ENCODE measurements at regions of chr10 and their contacts with region 1.

Region 1: GRCh38 chr10:52883996-52884871 is 111.7 kb upstream of the MBL2 start:
- DNase-seq: peak; percentile 98
- H3K4me3 Mint-ChIP-seq: peak overlapping the region; percentile 65
- H3K27ac Mint-ChIP-seq: peak overlapping the region; percentile 85
- H3K4me1 Mint-ChIP-seq: peaks cover 30% of the 10 kb centered on the region
- H3K27me3 Mint-ChIP-seq: no peaks in the 10 kb centered on the region
- CTCF ChIP-seq: peak; percentile 93

Region 2: GRCh38 chr10:52818019-52818418 is 66.2 kb before region 1 on chr10:
- CTCF ChIA-PET with region 1: interaction called, 69 read pairs
- POLR2A ChIA-PET with region 1: interaction called, 19 read pairs
- intact Hi-C with region 1: loop called (anchors 1 kb)
- DNase-seq: peak; percentile 80
- H3K4me3 Mint-ChIP-seq: no peak overlapping the region
- H3K27ac Mint-ChIP-seq: no peak overlapping the region
- H3K4me1 Mint-ChIP-seq: peaks cover 6% of the 10 kb centered on the region
- H3K27me3 Mint-ChIP-seq: no peaks in the 10 kb centered on the region
- CTCF ChIP-seq: peak; percentile 44

Region 3: GRCh38 chr10:53209944-53210611 is 325.8 kb after region 1 on chr10:
- CTCF ChIA-PET with region 1: interaction called, 31 read pairs
- POLR2A ChIA-PET with region 1: interaction called, 3 read pairs
- intact Hi-C with region 1: loop called (anchors 1 kb)
- DNase-seq: peak; percentile 49
- H3K4me3 Mint-ChIP-seq: no peak overlapping the region
- H3K27ac Mint-ChIP-seq: no peak overlapping the region
- H3K4me1 Mint-ChIP-seq: no peaks in the 10 kb centered on the region
- H3K27me3 Mint-ChIP-seq: no peaks in the 10 kb centered on the region
- CTCF ChIP-seq: peak; percentile 45

Region 4: DNA sequence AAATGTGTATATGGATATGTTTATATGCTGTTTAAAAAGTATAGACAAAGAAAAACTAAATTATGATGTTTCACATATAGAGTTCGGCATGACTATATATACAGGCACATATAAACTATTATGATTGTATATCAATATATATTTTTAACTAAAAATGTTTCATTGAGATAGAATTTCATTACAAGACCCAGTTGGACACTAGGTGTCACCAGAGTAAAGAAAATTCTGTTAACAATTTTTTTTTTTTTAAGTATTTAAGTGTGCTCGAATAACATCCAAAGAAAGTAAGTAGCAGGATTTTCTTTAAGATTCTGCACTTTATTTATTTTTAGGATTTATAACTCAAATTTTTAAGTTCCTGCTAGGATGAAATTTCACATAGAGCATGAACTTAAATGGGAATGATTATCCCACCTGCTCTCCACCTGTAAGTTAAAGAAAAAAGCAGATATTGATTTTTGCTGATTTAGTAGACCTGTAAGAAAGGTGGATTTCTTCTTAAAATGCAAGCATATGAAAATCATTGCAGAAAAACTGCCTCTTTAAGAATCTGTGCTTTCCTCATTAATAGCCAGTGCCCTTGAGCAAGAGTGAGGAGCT is 955.3 kb after region 1 on chr10:
- CTCF ChIA-PET with region 1: interaction called, 4 read pairs
- POLR2A ChIA-PET with region 1: no interaction called
- intact Hi-C with region 1: loop called (anchors 5 kb)
- DNase-seq: peak; percentile 47
- H3K4me3 Mint-ChIP-seq: no peak overlapping the region
- H3K27ac Mint-ChIP-seq: no peak overlapping the region
- H3K4me1 Mint-ChIP-seq: peaks cover 24% of the 10 kb centered on the region
- H3K27me3 Mint-ChIP-seq: no peaks in the 10 kb centered on the region
- CTCF ChIP-seq: peak; percentile 60

Region 5: DNA sequence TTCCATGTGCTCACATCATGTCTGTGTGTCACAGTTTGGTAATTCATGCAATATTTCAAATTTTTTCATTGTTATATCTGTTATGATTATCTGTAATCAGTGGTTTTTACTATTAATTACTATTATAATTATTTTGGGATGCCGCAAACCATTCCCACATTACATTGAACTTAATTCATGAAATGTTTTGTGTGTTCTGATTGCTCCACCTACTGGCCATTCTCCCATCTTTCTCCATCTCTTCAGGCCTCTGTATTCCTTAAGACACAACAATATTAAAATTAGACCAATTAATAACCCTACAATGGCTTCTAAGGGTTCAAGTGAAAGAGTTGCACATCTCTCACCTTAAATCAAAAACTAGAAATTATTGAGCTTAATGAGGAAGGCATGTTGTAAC is 1518.3 kb after region 1 on chr10:
- CTCF ChIA-PET with region 1: interaction called, 12 read pairs
- POLR2A ChIA-PET with region 1: no interaction called
- intact Hi-C with region 1: loop called (anchors 1 kb)
- DNase-seq: peak; percentile 59
- H3K4me3 Mint-ChIP-seq: no peak overlapping the region
- H3K27ac Mint-ChIP-seq: no peak overlapping the region
- H3K4me1 Mint-ChIP-seq: no peaks in the 10 kb centered on the region
- H3K27me3 Mint-ChIP-seq: no peaks in the 10 kb centered on the region
- CTCF ChIP-seq: peak; percentile 62

Measured in MCF 10A (cell line).